Posterior cingulate gyrus (tissue), 11 donors: ENCODE measurements at regions of chr1 and their contacts with region 1.

Region 1: GRCh38 chr1:95311014-95311413 is 77.0 kb downstream of the RWDD3 start:
- DNase-seq: no peak

Region 2: GRCh38 chr1:95467036-95467435 is 156.0 kb after region 1 on chr1:
- intact Hi-C with region 1: loop called (anchors 5 kb)
- DNase-seq: no peak

Region 3: DNA sequence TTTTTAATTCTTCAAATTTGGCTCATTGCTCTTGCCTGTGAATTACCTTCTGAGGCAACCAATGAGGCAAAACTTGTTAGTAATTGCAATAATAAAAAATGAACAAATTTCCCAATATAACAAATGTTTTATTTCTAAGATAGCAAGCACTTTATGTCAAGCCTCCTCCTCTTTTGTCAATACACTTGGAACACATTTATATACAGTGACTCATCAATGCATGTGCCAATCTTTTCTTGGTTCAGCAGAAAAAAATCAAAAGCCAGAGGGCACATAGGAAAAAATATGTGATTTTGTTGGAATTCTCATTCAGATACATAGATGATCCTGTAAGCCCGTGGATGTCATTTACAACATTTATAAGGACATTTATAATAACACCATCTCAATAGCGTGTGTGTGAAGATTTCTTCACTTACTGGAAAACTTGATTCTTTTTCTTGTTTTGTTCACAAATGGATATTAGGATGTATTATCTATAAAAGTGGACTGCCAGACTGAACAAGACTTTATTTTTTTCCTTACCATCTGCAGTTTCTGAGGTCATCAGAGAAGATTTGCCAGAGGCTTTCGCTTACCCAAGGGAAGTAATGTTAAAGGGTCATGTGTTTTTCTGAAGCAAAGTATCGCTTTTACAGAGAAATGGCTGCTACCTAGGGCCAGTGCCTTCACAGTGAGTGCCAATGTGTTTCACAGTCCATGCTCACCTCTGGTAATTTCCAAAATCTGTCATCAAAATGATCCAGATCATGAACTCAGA is 764.9 kb after region 1 on chr1:
- intact Hi-C with region 1: no loop called
- DNase-seq: no peak